B cell (primary cell): ENCODE measurements at regions of chr11 and their contacts with region 1.

Region 1: DNA sequence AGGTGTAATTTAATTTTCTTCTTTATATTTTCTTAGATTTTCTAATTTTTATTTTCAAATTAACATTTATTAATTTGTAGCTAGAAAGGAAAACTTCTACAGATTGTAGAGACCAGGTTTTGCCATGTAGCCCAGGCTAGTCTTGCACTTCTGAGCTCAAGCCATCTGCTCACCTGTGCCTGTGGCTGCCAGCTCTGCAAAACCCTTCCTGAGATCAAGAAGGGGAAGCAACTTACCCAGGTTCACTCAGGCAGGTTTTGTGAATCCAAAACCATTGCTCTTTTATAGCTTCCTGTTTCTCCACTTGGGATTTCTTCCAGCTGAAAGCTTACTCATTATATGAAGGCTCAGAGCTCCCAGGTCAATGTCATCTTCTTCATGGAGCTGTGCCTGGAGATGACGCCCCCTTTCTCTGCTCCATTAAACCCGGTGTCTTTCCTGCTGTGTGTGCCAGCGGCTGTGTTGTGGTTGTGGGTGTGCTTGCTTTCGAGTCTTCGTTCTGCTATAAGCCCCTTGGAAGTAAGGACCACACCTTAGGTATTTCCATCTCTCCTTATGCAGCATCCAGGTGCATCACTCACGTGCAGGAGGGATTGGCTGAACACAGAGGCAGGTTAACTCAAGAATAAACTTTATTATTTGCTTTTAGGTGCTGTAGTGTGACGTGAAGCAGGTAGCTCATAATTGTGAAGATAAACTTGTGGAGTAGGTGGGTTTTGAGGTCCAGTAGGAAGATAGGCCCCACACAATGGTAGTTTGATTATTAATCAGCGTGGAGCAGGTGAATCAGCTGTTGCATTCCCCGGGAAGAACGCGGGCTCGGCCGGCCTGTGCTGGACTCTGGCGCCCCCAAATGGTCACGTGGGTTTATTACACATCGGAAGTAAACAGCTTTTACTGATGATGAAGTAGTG is 42.2 kb upstream of the INCENP start:
- DNase-seq: peak; percentile 84
- ATAC-seq: peak; percentile 92
- H3K4me3 ChIP-seq: peak overlapping the region in 4 of 5 experiments; percentile 12 to 47 (median 23)
- H3K4me3 Mint-ChIP-seq: peak overlapping the region; percentile 75
- H3K27ac ChIP-seq: no peak overlapping the region
- H3K27ac Mint-ChIP-seq: no peak overlapping the region
- H3K4me1 ChIP-seq: peaks cover 6 to 9% of the 10 kb centered on the region in 2 donors
- H3K4me1 Mint-ChIP-seq: peaks cover 9% of the 10 kb centered on the region
- H3K27me3 ChIP-seq: peaks cover 0 to 3% (median 0%) of the 10 kb centered on the region in 4 experiments
- H3K27me3 Mint-ChIP-seq: no peaks in the 10 kb centered on the region
- CTCF ChIP-seq: peak; percentile 98

Region 2: GRCh38 chr11:61792310-61793085 is 289.1 kb before region 1 on chr11 and contains the starts of genes FEN1 and TMEM258:
- CTCF ChIA-PET with region 1: interaction called, 179 read pairs
- POLR2A ChIA-PET with region 1: no interaction called
- intact Hi-C with region 1: loop called (anchors 1 kb)
- DNase-seq: peak; percentile 96
- ATAC-seq: peak; percentile 91
- H3K4me3 ChIP-seq: peak within 1 kb of the TSS; percentile 80 to 94 (median 88)
- H3K4me3 Mint-ChIP-seq: peak within 1 kb of the TSS; percentile 93
- H3K27ac ChIP-seq: peak within 1 kb of the TSS; percentile 92 to 96
- H3K27ac Mint-ChIP-seq: peak within 1 kb of the TSS; percentile 97
- H3K4me1 ChIP-seq: peaks cover 11 to 23% of the 10 kb centered on the region in 2 donors
- H3K4me1 Mint-ChIP-seq: peaks cover 34% of the 10 kb centered on the region
- H3K27me3 ChIP-seq: no peaks in the 10 kb centered on the region
- H3K27me3 Mint-ChIP-seq: no peaks in the 10 kb centered on the region
- CTCF ChIP-seq: no peak
- total RNA-seq, gene FEN1: 9.2 and 9.8 TPM in 2 replicates
- total RNA-seq, gene TMEM258: 64.6 and 65.8 TPM in 2 replicates

Region 3: GRCh38 chr11:61891331-61892084 is 190.1 kb before region 1 on chr11 and contains the start of gene FADS3:
- CTCF ChIA-PET with region 1: interaction called, 424 read pairs
- POLR2A ChIA-PET with region 1: interaction called, 3 read pairs
- intact Hi-C with region 1: no loop called
- DNase-seq: peak; percentile 96
- ATAC-seq: peak; percentile 61
- H3K4me3 ChIP-seq: peak within 1 kb of the TSS; percentile 13 to 84 (median 72)
- H3K4me3 Mint-ChIP-seq: peak within 1 kb of the TSS; percentile 94
- H3K27ac ChIP-seq: peak within 1 kb of the TSS; percentile 79 to 91
- H3K27ac Mint-ChIP-seq: peak within 1 kb of the TSS; percentile 96
- H3K4me1 ChIP-seq: peaks cover 18 to 29% of the 10 kb centered on the region in 2 donors
- H3K4me1 Mint-ChIP-seq: peaks cover 38% of the 10 kb centered on the region
- H3K27me3 ChIP-seq: no peaks in the 10 kb centered on the region
- H3K27me3 Mint-ChIP-seq: no peaks in the 10 kb centered on the region
- CTCF ChIP-seq: peak; percentile 47
- total RNA-seq, gene FADS3: 224 and 225 TPM in 2 replicates

Region 4: GRCh38 chr11:61947486-61948210 is 134.0 kb before region 1 on chr11:
- CTCF ChIA-PET with region 1: interaction called, 203 read pairs
- POLR2A ChIA-PET with region 1: no interaction called
- intact Hi-C with region 1: loop called (anchors 1 kb)
- DNase-seq: peak; percentile 82
- ATAC-seq: peak; percentile 90
- H3K4me3 ChIP-seq: no peak overlapping the region
- H3K4me3 Mint-ChIP-seq: no peak overlapping the region
- H3K27ac ChIP-seq: no peak overlapping the region
- H3K27ac Mint-ChIP-seq: peak overlapping the region; percentile 3
- H3K4me1 ChIP-seq: peaks cover 7 to 9% of the 10 kb centered on the region in 2 donors
- H3K4me1 Mint-ChIP-seq: peaks cover 8% of the 10 kb centered on the region
- H3K27me3 ChIP-seq: no peaks in the 10 kb centered on the region
- H3K27me3 Mint-ChIP-seq: peaks cover 4% of the 10 kb centered on the region
- CTCF ChIP-seq: peak; percentile 90

Region 5: GRCh38 chr11:61985885-61986345 is 95.7 kb before region 1 on chr11:
- CTCF ChIA-PET with region 1: interaction called, 12 read pairs
- POLR2A ChIA-PET with region 1: no interaction called
- intact Hi-C with region 1: no loop called
- DNase-seq: no peak
- ATAC-seq: no peak
- H3K4me3 ChIP-seq: no peak overlapping the region
- H3K4me3 Mint-ChIP-seq: no peak overlapping the region
- H3K27ac ChIP-seq: no peak overlapping the region
- H3K27ac Mint-ChIP-seq: no peak overlapping the region
- H3K4me1 ChIP-seq: peaks cover 4 to 6% of the 10 kb centered on the region in 2 donors
- H3K4me1 Mint-ChIP-seq: peaks cover 17% of the 10 kb centered on the region
- H3K27me3 ChIP-seq: peaks cover 0 to 3% (median 0%) of the 10 kb centered on the region in 4 experiments
- H3K27me3 Mint-ChIP-seq: peaks cover 9% of the 10 kb centered on the region
- CTCF ChIP-seq: no peak

Region 6: DNA sequence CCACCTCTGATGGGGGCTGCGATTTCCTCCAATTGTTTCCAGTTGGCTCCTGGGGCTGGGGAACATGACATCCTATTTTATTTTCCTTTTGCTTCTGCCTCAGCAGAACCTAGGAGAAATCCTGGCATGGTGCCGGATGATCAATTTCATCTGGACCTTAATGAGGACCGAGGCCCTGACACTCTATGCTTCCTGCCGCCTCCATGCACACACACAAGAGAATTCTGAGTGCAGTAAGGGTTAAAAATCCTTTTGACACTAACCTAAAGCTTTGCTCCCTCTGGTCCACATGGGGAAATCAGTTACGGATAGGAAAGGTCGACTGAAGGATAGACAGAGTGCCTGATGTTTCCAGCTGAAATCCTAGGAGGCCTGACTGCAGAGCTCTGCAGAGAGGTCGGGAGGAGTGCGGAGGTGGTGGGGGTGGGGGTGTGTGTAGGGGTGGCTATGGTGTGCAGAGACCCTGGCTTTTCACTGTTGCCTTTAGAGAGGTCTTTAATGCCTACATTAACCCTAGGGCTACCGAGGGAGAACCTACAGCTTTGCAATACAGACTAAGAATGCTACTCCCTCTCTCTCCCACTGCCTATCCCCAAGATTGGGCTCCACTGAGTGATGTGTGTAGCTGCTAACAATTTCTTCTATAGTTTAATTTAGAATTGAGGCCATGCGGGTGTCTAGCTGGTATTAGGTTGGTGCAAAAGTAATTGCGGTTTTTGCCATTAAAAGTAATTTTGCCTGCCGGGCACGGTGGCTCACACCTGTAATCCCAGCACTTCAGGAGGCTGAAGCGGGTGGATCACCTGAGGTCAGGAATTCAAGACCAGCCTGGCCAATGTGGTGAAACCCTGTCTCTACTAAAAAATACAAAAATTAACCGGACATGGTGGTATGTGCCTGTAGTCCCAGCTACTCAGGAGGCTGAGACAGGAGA is 11.4 kb before region 1 on chr11:
- CTCF ChIA-PET with region 1: interaction called, 16 read pairs
- POLR2A ChIA-PET with region 1: no interaction called
- intact Hi-C with region 1: no loop called
- DNase-seq: no peak
- ATAC-seq: no peak
- H3K4me3 ChIP-seq: no peak overlapping the region
- H3K4me3 Mint-ChIP-seq: no peak overlapping the region
- H3K27ac ChIP-seq: no peak overlapping the region
- H3K27ac Mint-ChIP-seq: no peak overlapping the region
- H3K4me1 ChIP-seq: no peaks in the 10 kb centered on the region
- H3K4me1 Mint-ChIP-seq: no peaks in the 10 kb centered on the region
- H3K27me3 ChIP-seq: no peaks in the 10 kb centered on the region
- H3K27me3 Mint-ChIP-seq: peaks cover 23% of the 10 kb centered on the region
- CTCF ChIP-seq: no peak